MCF 10A (cell line): ENCODE measurements at regions of chr20 and their contacts with region 1.

Region 1: GRCh38 chr20:57335392-57335791 is 5.8 kb downstream of the SPO11 start:
- DNase-seq: peak; percentile 26
- H3K4me3 Mint-ChIP-seq: no peak overlapping the region
- H3K27ac Mint-ChIP-seq: no peak overlapping the region
- H3K4me1 Mint-ChIP-seq: no peaks in the 10 kb centered on the region
- H3K27me3 Mint-ChIP-seq: peaks cover 28% of the 10 kb centered on the region
- CTCF ChIP-seq: no peak

Region 2: GRCh38 chr20:57223648-57224489 is 111.5 kb before region 1 on chr20:
- CTCF ChIA-PET with region 1: interaction called, 49 read pairs
- POLR2A ChIA-PET with region 1: interaction called, 3 read pairs
- intact Hi-C with region 1: no loop called
- DNase-seq: peak; percentile 11
- H3K4me3 Mint-ChIP-seq: no peak overlapping the region
- H3K27ac Mint-ChIP-seq: no peak overlapping the region
- H3K4me1 Mint-ChIP-seq: no peaks in the 10 kb centered on the region
- H3K27me3 Mint-ChIP-seq: peaks cover 12% of the 10 kb centered on the region
- CTCF ChIP-seq: no peak

Region 3: DNA sequence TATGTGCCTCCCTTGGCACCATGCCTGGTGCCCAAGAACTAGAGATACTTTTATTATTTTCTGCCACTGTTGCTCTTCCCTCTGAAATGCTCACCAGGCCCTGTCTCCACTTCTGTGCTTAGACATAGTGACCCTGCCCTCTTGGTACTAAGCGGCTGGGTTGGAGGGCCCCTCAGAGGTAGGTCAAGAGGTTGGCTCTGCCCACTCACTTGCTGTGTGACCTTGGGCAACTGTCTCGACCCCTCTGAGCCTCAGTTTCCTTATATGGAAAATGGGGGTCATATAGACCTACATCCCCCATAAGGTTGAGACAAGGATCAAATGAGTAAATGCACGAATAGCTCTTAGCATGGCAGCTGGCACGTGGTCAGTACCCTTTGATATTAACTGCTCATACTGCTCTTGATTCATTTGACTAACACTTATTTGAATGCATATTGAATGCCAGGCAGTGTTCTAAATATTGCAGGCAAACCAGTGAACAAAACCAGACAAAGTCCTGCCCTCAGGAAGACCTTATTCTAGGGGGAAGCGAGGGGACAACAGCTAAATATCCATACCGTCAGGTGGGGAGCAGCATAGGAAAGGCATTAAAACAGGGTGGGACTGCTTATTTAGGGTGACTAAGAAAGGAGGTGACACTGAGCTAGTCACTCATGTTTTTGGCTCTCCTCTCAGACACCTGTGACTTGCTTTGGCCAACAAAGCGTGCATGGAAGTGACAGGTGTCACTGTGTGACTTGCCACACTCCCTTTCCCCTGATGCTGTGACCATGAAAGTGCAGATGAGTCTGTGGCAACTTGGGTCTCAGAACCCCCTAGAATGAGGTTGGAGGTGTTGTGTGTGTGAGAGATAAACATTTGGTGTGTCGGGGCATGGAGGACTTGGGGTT is 20.1 kb before region 1 on chr20:
- CTCF ChIA-PET with region 1: interaction called, 10 read pairs
- POLR2A ChIA-PET with region 1: interaction called, 8 read pairs
- intact Hi-C with region 1: no loop called
- DNase-seq: no peak
- H3K4me3 Mint-ChIP-seq: no peak overlapping the region
- H3K27ac Mint-ChIP-seq: no peak overlapping the region
- H3K4me1 Mint-ChIP-seq: no peaks in the 10 kb centered on the region
- H3K27me3 Mint-ChIP-seq: no peaks in the 10 kb centered on the region
- CTCF ChIP-seq: no peak

Region 4: GRCh38 chr20:57458400-57459160 is 123.2 kb after region 1 on chr20:
- CTCF ChIA-PET with region 1: no interaction called
- POLR2A ChIA-PET with region 1: no interaction called
- intact Hi-C with region 1: no loop called
- DNase-seq: peak; percentile 18
- H3K4me3 Mint-ChIP-seq: no peak overlapping the region
- H3K27ac Mint-ChIP-seq: no peak overlapping the region
- H3K4me1 Mint-ChIP-seq: no peaks in the 10 kb centered on the region
- H3K27me3 Mint-ChIP-seq: peaks cover 56% of the 10 kb centered on the region
- CTCF ChIP-seq: no peak